ENCODE measurements at regions of chr1 and their contacts with region 1.

Region 1: DNA sequence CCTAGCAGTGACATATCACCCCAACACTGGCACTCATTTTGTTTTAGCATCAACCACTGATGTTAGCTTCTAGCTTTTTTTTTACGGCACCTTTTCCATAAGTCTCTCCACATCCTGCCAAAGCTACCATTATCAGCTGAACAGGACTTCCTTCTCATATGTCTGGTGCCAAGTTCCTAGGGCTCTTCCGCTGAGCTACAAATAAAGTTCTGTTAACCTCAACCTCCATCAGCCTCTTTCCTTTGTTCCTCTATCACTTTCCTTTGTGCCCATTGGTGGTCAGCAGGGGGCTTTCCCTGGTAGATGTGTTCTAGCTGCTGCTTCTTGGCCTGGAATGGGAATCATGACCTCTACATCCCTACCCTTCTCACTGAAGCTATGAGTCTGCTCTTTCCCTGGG is 163.8 kb downstream of the FAF1 start:
- DNase-seq: no peak
- ATAC-seq: no peak
- H3K4me3 ChIP-seq: no peak overlapping the region
- H3K27ac ChIP-seq: no peak overlapping the region
- H3K4me1 ChIP-seq: peaks cover 0 to 9% (median 0%) of the 10 kb centered on the region in 9 donors
- H3K27me3 ChIP-seq: no peaks in the 10 kb centered on the region
- CTCF ChIP-seq: no peak

Region 2: DNA sequence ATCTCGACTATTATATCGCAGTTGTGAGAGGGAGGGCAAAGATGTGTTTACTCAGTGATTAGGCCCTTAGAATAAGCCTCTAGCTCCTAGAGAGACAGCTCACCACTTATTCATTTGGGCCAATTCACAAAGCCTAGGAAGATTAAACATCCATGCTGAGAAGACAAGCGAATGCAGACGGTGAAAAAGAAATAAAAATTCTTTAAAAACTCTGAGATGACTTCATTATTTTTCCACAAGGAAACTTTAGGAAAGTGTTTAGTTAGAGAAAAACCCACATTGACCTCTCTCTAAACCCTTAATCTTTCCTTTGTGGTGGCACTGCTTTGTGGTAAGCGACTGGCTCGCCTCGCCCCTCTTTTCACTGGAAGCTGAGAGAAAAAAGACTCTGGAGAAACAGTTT is 226.2 kb before region 1 on chr1:
- intact Hi-C with region 1: no loop called
- DNase-seq: no peak
- ATAC-seq: no peak
- H3K4me3 ChIP-seq: no peak overlapping the region
- H3K27ac ChIP-seq: no peak overlapping the region
- H3K4me1 ChIP-seq: peaks cover 0 to 4% (median 0%) of the 10 kb centered on the region in 9 donors
- H3K27me3 ChIP-seq: no peaks in the 10 kb centered on the region
- CTCF ChIP-seq: no peak

Region 3: DNA sequence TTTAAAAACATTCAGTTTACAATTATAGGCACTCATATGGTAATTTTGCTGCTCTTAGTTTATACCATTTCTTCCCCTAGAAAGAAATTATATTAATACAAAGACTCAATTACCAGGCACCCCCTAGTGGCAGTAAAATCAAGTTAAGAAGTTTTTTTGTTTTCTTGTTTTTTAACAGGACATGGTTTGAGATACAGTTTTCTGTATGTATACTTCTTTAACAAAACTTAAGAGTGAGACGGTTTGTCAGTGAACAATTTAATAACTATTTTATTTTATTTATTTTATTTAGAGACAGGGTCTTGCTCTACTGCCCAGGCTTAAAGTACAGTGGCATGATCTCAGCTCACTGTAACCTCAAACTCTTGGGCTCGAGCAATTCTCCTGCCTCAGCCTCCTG is 60.8 kb before region 1 on chr1:
- intact Hi-C with region 1: no loop called
- DNase-seq: no peak
- ATAC-seq: no peak
- H3K4me3 ChIP-seq: no peak overlapping the region
- H3K27ac ChIP-seq: no peak overlapping the region
- H3K4me1 ChIP-seq: peaks cover 0 to 20% (median 0%) of the 10 kb centered on the region in 9 donors
- H3K27me3 ChIP-seq: no peaks in the 10 kb centered on the region
- CTCF ChIP-seq: peak in 8 of 9 donors; percentile 13 to 55 (median 39)

Region 4: DNA sequence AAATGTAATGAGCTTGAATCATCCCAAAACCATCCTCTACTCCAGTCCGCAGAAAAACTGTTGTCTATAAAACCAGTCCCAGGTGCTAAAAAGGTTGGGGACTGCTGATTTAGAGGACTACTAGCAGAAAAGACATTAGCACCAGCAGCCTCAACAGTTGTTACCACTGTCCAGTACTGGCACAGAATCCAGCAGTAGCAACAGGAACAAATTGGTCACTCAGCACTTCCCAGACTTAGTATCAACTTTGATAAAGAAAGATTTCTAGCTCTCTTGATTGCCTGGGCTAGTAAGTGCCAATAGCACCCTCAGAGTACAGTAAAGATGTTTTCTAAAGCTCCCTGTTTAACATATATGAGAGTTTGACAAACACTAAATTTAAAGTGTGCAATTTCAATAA is 35.9 kb after region 1 on chr1:
- intact Hi-C with region 1: loop called in 1 of 10 experiments (anchors 1 kb)
- DNase-seq: no peak
- ATAC-seq: peak in 2 of 8 donors; percentile 46 to 52
- H3K4me3 ChIP-seq: no peak overlapping the region
- H3K27ac ChIP-seq: no peak overlapping the region
- H3K4me1 ChIP-seq: peaks cover 0 to 37% (median 16%) of the 10 kb centered on the region in 9 donors
- H3K27me3 ChIP-seq: no peaks in the 10 kb centered on the region
- CTCF ChIP-seq: no peak

Measured in heart right ventricle (tissue), 16 donors.